ENCODE measurements at regions of chr17 and their contacts with region 1.

Region 1: GRCh38 chr17:44324571-44325275 is at the start of gene SLC25A39:
- DNase-seq: peak; percentile 97 to 99
- ATAC-seq: peak; percentile 72 to 92 (median 76)
- H3K4me3 ChIP-seq: peak within 1 kb of the TSS; percentile 91
- H3K4me3 Mint-ChIP-seq: peak within 1 kb of the TSS; percentile 92
- H3K27ac ChIP-seq: peak within 1 kb of the TSS; percentile 99
- H3K27ac Mint-ChIP-seq: peak within 1 kb of the TSS; percentile 97 to 98
- H3K4me1 ChIP-seq: peaks cover 40% of the 10 kb centered on the region
- H3K4me1 Mint-ChIP-seq: peaks cover 5 to 26% of the 10 kb centered on the region in 2 donors
- H3K27me3 ChIP-seq: no peaks in the 10 kb centered on the region
- H3K27me3 Mint-ChIP-seq: no peaks in the 10 kb centered on the region
- CTCF ChIP-seq: no peak
- total RNA-seq, gene SLC25A39: 82.4 to 105 (median 97.9) TPM

Region 2: DNA sequence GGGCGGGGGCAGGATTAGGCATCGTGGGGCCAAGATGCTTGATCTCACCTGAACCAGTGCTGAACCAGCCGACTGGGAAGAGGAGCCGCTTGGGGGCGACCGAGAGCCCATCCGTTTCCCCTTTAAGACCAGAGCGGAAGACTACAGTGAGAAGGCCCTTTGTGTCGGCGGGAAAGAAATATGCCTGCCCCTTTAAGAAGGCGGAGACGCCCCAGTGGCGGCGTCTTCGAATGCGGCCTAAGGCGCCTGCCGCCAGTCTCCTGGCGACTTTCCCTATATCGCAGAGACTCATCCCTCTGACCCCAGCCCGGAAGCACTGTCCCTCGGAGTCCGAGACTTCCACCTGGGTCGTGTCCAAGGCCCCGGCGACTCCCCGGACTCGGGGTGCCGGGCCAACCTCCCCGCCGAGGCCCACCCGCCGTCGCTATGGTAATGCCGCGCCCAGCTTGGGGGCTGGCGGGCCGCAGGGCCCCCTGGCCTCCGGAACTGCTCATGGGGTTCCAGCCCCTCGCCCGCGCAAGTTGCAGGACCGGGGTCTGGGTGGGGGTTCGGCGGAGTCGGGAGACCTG is 182.9 kb before region 1 on chr17 and contains the start of gene HROB:
- intact Hi-C with region 1: loop called (anchors 2 kb)
- DNase-seq: peak; percentile 98 to 99
- ATAC-seq: peak; percentile 97 to 99 (median 97)
- H3K4me3 ChIP-seq: peak within 1 kb of the TSS; percentile 53
- H3K4me3 Mint-ChIP-seq: peak within 1 kb of the TSS; percentile 83
- H3K27ac ChIP-seq: peak within 1 kb of the TSS; percentile 73
- H3K27ac Mint-ChIP-seq: peak within 1 kb of the TSS; percentile 73 to 83
- H3K4me1 ChIP-seq: peaks cover 15% of the 10 kb centered on the region
- H3K4me1 Mint-ChIP-seq: peaks cover 0 to 6% of the 10 kb centered on the region in 2 donors
- H3K27me3 ChIP-seq: peaks cover 9% of the 10 kb centered on the region
- H3K27me3 Mint-ChIP-seq: peaks cover 11 to 14% of the 10 kb centered on the region in 2 donors
- CTCF ChIP-seq: peak; percentile 88
- total RNA-seq, gene HROB: 1.9 to 4.4 (median 2.4) TPM

Region 3: DNA sequence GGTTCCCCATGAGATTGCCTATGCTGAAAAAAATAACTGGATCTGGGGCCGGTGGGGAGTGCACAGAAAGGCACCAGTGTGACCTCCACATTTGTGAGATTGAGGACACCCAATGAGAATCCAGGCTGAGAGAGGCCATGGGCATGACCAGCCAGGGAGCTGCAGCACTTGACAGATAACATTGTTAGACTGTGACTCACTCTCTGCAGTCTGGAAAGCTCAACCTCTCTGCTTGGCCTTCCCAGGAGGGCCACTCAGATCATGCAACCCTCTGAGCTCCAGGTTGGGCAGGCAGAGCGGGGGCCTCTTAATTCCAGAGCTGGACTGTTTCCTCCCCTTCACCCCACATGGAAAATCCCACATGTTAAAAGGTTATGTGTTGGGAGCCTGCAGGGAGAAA is 262.6 kb after region 1 on chr17:
- intact Hi-C with region 1: no loop called
- DNase-seq: no peak
- ATAC-seq: no peak
- H3K4me3 ChIP-seq: no peak overlapping the region
- H3K4me3 Mint-ChIP-seq: no peak overlapping the region
- H3K27ac ChIP-seq: no peak overlapping the region
- H3K27ac Mint-ChIP-seq: no peak overlapping the region
- H3K4me1 ChIP-seq: no peaks in the 10 kb centered on the region
- H3K4me1 Mint-ChIP-seq: no peaks in the 10 kb centered on the region
- H3K27me3 ChIP-seq: no peaks in the 10 kb centered on the region
- H3K27me3 Mint-ChIP-seq: peaks cover 5 to 8% of the 10 kb centered on the region in 2 donors
- CTCF ChIP-seq: no peak

Measured in natural killer cell (primary cell).